AG04450 (cell line): ENCODE measurements at regions of chr7 and their contacts with region 1.

Region 1: DNA sequence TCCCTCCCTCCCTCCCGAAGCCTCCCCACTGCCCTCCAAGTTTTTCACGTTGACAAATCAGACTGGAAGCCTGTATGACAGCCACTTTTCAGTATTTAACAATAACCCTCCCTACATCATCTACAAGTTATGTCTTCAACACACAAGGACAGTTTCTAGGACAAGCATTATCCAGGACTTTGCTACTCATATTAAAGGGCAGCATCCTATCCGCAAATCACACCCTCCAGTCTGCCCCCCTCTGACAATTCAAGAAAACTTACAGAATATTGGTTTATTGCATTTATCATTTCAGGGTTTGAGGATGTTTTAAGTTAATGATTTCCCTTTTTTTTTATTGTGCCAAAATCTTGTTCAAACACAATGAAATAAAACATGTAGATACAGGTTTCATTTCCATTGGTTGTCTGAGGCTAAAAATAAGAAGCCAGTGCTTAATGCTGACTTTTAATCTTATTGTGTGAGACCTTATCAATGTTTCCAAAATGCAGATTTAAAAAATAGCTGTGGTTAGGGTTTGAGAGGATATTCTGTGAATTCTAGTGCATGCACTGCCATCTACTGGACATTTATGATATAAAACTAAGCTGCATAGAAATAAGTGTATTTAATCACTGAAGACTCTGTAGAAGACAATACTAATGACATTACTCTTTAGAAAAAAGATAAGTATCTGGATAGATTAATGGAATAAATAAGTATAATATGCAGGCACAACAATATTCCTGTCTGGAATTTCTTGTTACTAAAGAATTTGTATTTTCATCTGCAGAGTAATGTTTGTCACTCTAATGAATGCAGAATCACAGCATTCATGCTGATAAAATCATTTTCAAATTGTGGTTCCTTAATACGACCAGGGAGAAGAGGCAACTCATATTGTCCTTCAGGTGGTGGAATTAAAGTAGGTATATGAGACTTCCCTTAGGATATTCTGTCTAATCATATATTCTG is 64.1 kb downstream of the CAV1 start:
- DNase-seq: no peak
- H3K4me3 ChIP-seq: no peak overlapping the region
- H3K27ac ChIP-seq: no peak overlapping the region
- H3K27me3 ChIP-seq: no peaks in the 10 kb centered on the region
- CTCF ChIP-seq: peak; percentile 46

Region 2: GRCh38 chr7:116138202-116138801 is 450.6 kb before region 1 on chr7:
- CTCF ChIA-PET with region 1: interaction called, 24 read pairs
- POLR2A ChIA-PET with region 1: no interaction called
- DNase-seq: peak; percentile 57
- H3K4me3 ChIP-seq: no peak overlapping the region
- H3K27ac ChIP-seq: no peak overlapping the region
- H3K27me3 ChIP-seq: no peaks in the 10 kb centered on the region
- CTCF ChIP-seq: peak; percentile 89

Region 3: DNA sequence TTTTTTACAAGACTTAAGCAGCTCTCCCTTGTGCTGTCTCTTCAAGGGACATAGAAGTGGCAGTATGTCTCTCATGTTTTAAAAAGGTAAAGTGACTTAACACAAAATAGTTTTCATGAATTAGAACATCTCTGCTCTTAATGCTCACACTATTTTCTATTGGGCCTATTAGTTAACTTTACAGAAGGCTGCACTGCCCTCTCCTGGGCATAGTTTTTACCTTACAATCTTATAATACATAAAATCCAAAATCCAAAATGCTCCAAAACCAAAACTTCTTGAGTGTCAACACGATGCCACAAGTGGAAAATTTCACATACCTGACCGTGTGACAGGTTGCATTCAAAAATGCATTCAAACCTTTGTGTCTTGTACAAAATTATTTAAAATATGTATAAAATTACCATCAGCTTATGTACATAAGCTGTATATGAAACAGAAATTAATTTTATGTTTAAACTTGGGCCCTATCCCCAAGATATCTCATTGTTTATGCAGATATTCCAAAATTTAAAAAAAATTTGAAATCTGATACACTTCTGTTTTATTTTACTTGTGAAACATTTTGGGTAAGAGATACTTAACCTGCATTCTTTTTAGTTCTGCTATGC is 352.8 kb before region 1 on chr7:
- CTCF ChIA-PET with region 1: interaction called, 56 read pairs
- POLR2A ChIA-PET with region 1: no interaction called
- DNase-seq: no peak
- H3K4me3 ChIP-seq: no peak overlapping the region
- H3K27ac ChIP-seq: no peak overlapping the region
- H3K27me3 ChIP-seq: no peaks in the 10 kb centered on the region
- CTCF ChIP-seq: peak; percentile 59

Region 4: GRCh38 chr7:116265881-116266280 is 323.0 kb before region 1 on chr7:
- CTCF ChIA-PET with region 1: interaction called, 132 read pairs
- POLR2A ChIA-PET with region 1: no interaction called
- DNase-seq: no peak
- H3K4me3 ChIP-seq: no peak overlapping the region
- H3K27ac ChIP-seq: no peak overlapping the region
- H3K27me3 ChIP-seq: no peaks in the 10 kb centered on the region
- CTCF ChIP-seq: no peak

Region 5: DNA sequence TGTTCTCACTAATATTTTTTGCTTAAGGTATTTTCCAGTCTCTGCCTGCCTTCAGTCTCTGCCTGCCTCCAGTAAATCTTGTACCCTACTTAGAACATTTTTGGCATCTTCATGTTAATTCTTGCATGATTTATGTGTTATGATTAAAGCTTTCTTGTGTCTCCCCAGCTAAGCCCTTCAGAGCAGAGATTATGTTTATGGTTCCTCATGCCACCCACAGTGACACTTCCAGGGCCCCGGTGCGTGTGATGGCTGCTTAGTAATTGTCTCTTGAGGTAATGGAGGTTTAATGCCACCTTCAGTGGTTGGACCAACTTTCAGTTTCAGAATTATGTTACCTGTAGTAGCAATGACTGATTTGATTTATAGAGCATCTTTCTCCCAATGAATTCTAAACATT is 12.5 kb after region 1 on chr7:
- CTCF ChIA-PET with region 1: interaction called, 38 read pairs
- POLR2A ChIA-PET with region 1: no interaction called
- DNase-seq: no peak
- H3K4me3 ChIP-seq: no peak overlapping the region
- H3K27ac ChIP-seq: no peak overlapping the region
- H3K27me3 ChIP-seq: no peaks in the 10 kb centered on the region
- CTCF ChIP-seq: no peak

Region 6: GRCh38 chr7:116809636-116810266 is 220.8 kb after region 1 on chr7:
- CTCF ChIA-PET with region 1: interaction called, 230 read pairs
- POLR2A ChIA-PET with region 1: no interaction called
- DNase-seq: peak; percentile 32
- H3K4me3 ChIP-seq: no peak overlapping the region
- H3K27ac ChIP-seq: no peak overlapping the region
- H3K27me3 ChIP-seq: no peaks in the 10 kb centered on the region
- CTCF ChIP-seq: peak; percentile 70